ENCODE measurements at regions of chr20 and their contacts with region 1.

Region 1: GRCh38 chr20:33810885-33811777 is at the start of gene CHMP4B:
- DNase-seq: peak; percentile 97 to 99 (median 98)
- ATAC-seq: peak; percentile 95
- H3K4me3 ChIP-seq: peak within 1 kb of the TSS; percentile 83
- H3K4me3 Mint-ChIP-seq: peak within 1 kb of the TSS; percentile 100
- H3K27ac ChIP-seq: peak within 1 kb of the TSS; percentile 38 to 66
- H3K27ac Mint-ChIP-seq: peak within 1 kb of the TSS; percentile 93
- H3K4me1 ChIP-seq: peaks cover 45% of the 10 kb centered on the region
- H3K4me1 Mint-ChIP-seq: peaks cover 49% of the 10 kb centered on the region
- H3K27me3 ChIP-seq: no peaks in the 10 kb centered on the region
- H3K27me3 Mint-ChIP-seq: no peaks in the 10 kb centered on the region
- CTCF ChIP-seq: no peak
- total RNA-seq, gene CHMP4B: 44.2 to 49.3 TPM

Region 2: DNA sequence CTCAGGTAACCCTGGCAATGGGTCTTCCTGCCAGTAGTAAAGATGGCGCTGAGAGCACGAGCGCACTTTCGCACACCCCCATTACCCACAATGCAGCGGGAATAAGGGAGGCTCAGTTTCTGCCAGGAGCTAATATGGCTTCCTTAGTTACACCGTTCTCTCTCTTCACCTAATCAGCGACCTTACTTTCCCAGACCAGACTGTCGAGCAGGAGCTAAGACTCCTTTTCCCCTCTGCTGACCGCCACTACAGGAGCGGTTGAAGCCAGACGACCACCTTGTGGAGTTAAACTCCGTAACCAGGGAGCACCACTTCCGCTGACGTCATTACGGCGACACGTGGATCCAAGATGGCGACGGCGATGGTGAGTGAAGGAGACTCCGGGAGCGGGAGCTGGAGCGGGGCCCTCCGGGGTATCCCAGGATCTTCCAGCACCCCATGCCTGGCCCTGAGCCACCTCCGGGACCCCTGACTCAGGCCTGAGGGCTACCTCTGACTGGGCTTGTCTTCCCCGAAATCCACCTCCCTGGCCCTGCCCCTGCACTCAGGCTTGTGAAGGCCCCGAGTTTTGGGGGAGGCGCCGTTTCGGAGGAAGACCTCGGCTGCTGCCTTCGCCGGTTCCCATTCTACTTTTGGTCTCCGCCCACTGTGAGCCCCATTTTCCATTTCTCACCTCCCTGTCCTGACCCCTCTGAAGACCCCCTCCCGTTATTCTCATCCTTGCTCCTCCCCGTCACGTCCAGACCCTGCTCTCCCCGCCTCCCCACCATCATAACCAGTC is 1701.5 kb before region 1 on chr20 and contains the start of gene TM9SF4:
- CTCF ChIA-PET with region 1: no interaction called
- POLR2A ChIA-PET with region 1: no interaction called
- intact Hi-C with region 1: loop called in 1 of 2 experiments (anchors 10 kb)
- DNase-seq: peak; percentile 77 to 96 (median 88)
- ATAC-seq: peak; percentile 89
- H3K4me3 ChIP-seq: peak within 1 kb of the TSS; percentile 97
- H3K4me3 Mint-ChIP-seq: peak within 1 kb of the TSS; percentile 92
- H3K27ac ChIP-seq: peak within 1 kb of the TSS; percentile 100
- H3K27ac Mint-ChIP-seq: peak within 1 kb of the TSS; percentile 93
- H3K4me1 ChIP-seq: peaks cover 27% of the 10 kb centered on the region
- H3K4me1 Mint-ChIP-seq: peaks cover 40% of the 10 kb centered on the region
- H3K27me3 ChIP-seq: no peaks in the 10 kb centered on the region
- H3K27me3 Mint-ChIP-seq: no peaks in the 10 kb centered on the region
- CTCF ChIP-seq: no peak
- total RNA-seq, gene TM9SF4: 22.4 to 24.5 TPM

Region 3: GRCh38 chr20:33719989-33720709 is 91.0 kb before region 1 on chr20 and contains the start of gene PXMP4:
- CTCF ChIA-PET with region 1: interaction called, 4 read pairs
- POLR2A ChIA-PET with region 1: interaction called, 7 read pairs
- intact Hi-C with region 1: loop called (anchors 1 to 2 kb)
- DNase-seq: peak; percentile 68 to 97 (median 82)
- ATAC-seq: peak; percentile 94
- H3K4me3 ChIP-seq: peak within 1 kb of the TSS; percentile 66
- H3K4me3 Mint-ChIP-seq: peak within 1 kb of the TSS; percentile 83
- H3K27ac ChIP-seq: peak within 1 kb of the TSS; percentile 2 to 72
- H3K27ac Mint-ChIP-seq: peak within 1 kb of the TSS; percentile 60
- H3K4me1 ChIP-seq: peaks cover 20% of the 10 kb centered on the region
- H3K4me1 Mint-ChIP-seq: peaks cover 18% of the 10 kb centered on the region
- H3K27me3 ChIP-seq: no peaks in the 10 kb centered on the region
- H3K27me3 Mint-ChIP-seq: no peaks in the 10 kb centered on the region
- CTCF ChIP-seq: peak; percentile 13
- total RNA-seq, gene PXMP4: 3.6 to 4.1 TPM

Region 4: GRCh38 chr20:33853507-33853813 is 42.3 kb after region 1 on chr20:
- CTCF ChIA-PET with region 1: no interaction called
- POLR2A ChIA-PET with region 1: interaction called, 24 read pairs
- intact Hi-C with region 1: loop called in 1 of 2 experiments (anchors 5 kb)
- DNase-seq: peak in 12 of 14 experiments; percentile 6 to 64 (median 46)
- ATAC-seq: peak; percentile 96
- H3K4me3 ChIP-seq: no peak overlapping the region
- H3K4me3 Mint-ChIP-seq: peak overlapping the region; percentile 64
- H3K27ac ChIP-seq: peak overlapping the region; percentile 66 to 71
- H3K27ac Mint-ChIP-seq: peak overlapping the region; percentile 98
- H3K4me1 ChIP-seq: peaks cover 41% of the 10 kb centered on the region
- H3K4me1 Mint-ChIP-seq: peaks cover 72% of the 10 kb centered on the region
- H3K27me3 ChIP-seq: no peaks in the 10 kb centered on the region
- H3K27me3 Mint-ChIP-seq: no peaks in the 10 kb centered on the region
- CTCF ChIP-seq: no peak

Region 5: DNA sequence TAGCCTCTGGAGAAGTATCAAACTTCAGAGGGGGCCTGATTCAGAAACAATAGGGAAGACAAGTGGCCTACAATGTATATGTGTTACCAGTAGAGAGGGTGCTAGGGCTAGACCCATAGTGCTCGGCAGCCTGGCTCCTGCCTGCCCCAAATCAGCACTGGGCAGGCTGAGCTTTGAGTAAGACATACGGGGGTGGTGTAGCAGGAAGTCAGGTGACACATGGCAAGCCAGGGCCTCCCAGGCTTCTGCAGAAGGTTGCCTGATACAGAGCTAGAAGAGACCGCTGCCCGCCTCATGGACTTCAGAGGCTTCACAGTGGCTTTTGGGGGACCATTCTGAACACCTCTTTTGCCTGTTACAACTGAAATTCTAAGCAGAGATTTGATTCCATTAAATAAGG is 226.0 kb after region 1 on chr20:
- CTCF ChIA-PET with region 1: no interaction called
- POLR2A ChIA-PET with region 1: no interaction called
- intact Hi-C with region 1: no loop called
- DNase-seq: peak; percentile 16 to 68 (median 44)
- ATAC-seq: peak; percentile 97
- H3K4me3 ChIP-seq: no peak overlapping the region
- H3K4me3 Mint-ChIP-seq: peak overlapping the region; percentile 76
- H3K27ac ChIP-seq: no peak overlapping the region
- H3K27ac Mint-ChIP-seq: peak overlapping the region; percentile 55
- H3K4me1 ChIP-seq: peaks cover 34% of the 10 kb centered on the region
- H3K4me1 Mint-ChIP-seq: peaks cover 88% of the 10 kb centered on the region
- H3K27me3 ChIP-seq: no peaks in the 10 kb centered on the region
- H3K27me3 Mint-ChIP-seq: no peaks in the 10 kb centered on the region
- CTCF ChIP-seq: no peak

Region 6: GRCh38 chr20:34363062-34363464 is 551.9 kb after region 1 on chr20 and contains the start of gene ITCH:
- CTCF ChIA-PET with region 1: no interaction called
- POLR2A ChIA-PET with region 1: no interaction called
- intact Hi-C with region 1: loop called in 1 of 2 experiments (anchors 5 kb)
- DNase-seq: peak; percentile 86 to 96 (median 89)
- ATAC-seq: peak; percentile 100
- H3K4me3 ChIP-seq: peak within 1 kb of the TSS; percentile 98
- H3K4me3 Mint-ChIP-seq: peak within 1 kb of the TSS; percentile 100
- H3K27ac ChIP-seq: peak within 1 kb of the TSS; percentile 72 to 78
- H3K27ac Mint-ChIP-seq: peak within 1 kb of the TSS; percentile 95
- H3K4me1 ChIP-seq: peaks cover 47% of the 10 kb centered on the region
- H3K4me1 Mint-ChIP-seq: peaks cover 37% of the 10 kb centered on the region
- H3K27me3 ChIP-seq: no peaks in the 10 kb centered on the region
- H3K27me3 Mint-ChIP-seq: no peaks in the 10 kb centered on the region
- CTCF ChIP-seq: no peak
- total RNA-seq, gene ITCH: 44.2 to 47.0 TPM